B cell (primary cell): ENCODE measurements at regions of chr10 and their contacts with region 1.

Region 1: DNA sequence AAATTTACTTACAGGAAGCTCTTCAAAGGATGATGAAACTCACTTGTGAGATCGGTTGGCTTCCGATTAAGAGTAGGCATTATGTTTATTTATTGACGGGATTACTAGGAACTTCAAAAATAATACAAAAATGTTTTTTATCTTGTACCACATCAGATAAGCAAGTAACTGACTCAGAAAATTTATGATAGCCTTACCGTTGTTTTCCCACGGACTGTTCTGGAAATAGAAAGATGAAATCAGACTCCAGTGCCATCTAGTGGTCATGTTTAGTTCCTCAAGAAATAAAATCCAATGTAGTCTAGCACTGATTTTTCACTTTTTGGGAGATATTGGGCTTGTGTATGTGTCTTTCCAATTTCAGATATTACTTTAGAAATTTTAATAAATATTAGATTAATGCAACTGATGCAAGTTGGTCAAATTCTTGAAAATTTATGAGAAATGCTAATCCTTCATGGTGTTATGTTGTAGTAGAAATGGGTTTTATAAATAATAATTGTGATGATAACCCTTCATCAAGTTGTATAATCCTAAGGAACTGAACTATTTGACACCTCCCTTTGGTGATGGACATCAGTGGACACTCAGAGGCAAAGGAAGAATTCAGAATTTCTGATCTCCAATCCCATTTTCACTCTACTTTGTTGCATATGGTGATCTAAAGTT is 168.8 kb downstream of the TMEM26 start:
- DNase-seq: peak; percentile 64
- ATAC-seq: no peak
- H3K4me3 ChIP-seq: no peak overlapping the region
- H3K4me3 Mint-ChIP-seq: peak overlapping the region; percentile 30
- H3K27ac ChIP-seq: no peak overlapping the region
- H3K27ac Mint-ChIP-seq: no peak overlapping the region
- H3K4me1 ChIP-seq: peaks cover 20 to 26% of the 10 kb centered on the region in 2 donors
- H3K4me1 Mint-ChIP-seq: peaks cover 31% of the 10 kb centered on the region
- H3K27me3 ChIP-seq: no peaks in the 10 kb centered on the region
- H3K27me3 Mint-ChIP-seq: no peaks in the 10 kb centered on the region
- CTCF ChIP-seq: peak; percentile 93

Region 2: GRCh38 chr10:60444494-60445064 is 839.8 kb before region 1 on chr10:
- CTCF ChIA-PET with region 1: no interaction called
- POLR2A ChIA-PET with region 1: no interaction called
- intact Hi-C with region 1: loop called (anchors 10 kb)
- DNase-seq: no peak
- ATAC-seq: no peak
- H3K4me3 ChIP-seq: no peak overlapping the region
- H3K4me3 Mint-ChIP-seq: no peak overlapping the region
- H3K27ac ChIP-seq: no peak overlapping the region
- H3K27ac Mint-ChIP-seq: no peak overlapping the region
- H3K4me1 ChIP-seq: peaks cover 7 to 8% of the 10 kb centered on the region in 2 donors
- H3K4me1 Mint-ChIP-seq: peaks cover 8% of the 10 kb centered on the region
- H3K27me3 ChIP-seq: no peaks in the 10 kb centered on the region
- H3K27me3 Mint-ChIP-seq: no peaks in the 10 kb centered on the region
- CTCF ChIP-seq: peak; percentile 27

Region 3: GRCh38 chr10:60816628-60817397 is 467.5 kb before region 1 on chr10:
- CTCF ChIA-PET with region 1: interaction called, 13 read pairs
- POLR2A ChIA-PET with region 1: no interaction called
- intact Hi-C with region 1: loop called (anchors 1 kb)
- DNase-seq: peak; percentile 75
- ATAC-seq: peak; percentile 65
- H3K4me3 ChIP-seq: no peak overlapping the region
- H3K4me3 Mint-ChIP-seq: no peak overlapping the region
- H3K27ac ChIP-seq: no peak overlapping the region
- H3K27ac Mint-ChIP-seq: no peak overlapping the region
- H3K4me1 ChIP-seq: peaks cover 0 to 3% of the 10 kb centered on the region in 2 donors
- H3K4me1 Mint-ChIP-seq: peaks cover 7% of the 10 kb centered on the region
- H3K27me3 ChIP-seq: no peaks in the 10 kb centered on the region
- H3K27me3 Mint-ChIP-seq: no peaks in the 10 kb centered on the region
- CTCF ChIP-seq: peak; percentile 93

Region 4: DNA sequence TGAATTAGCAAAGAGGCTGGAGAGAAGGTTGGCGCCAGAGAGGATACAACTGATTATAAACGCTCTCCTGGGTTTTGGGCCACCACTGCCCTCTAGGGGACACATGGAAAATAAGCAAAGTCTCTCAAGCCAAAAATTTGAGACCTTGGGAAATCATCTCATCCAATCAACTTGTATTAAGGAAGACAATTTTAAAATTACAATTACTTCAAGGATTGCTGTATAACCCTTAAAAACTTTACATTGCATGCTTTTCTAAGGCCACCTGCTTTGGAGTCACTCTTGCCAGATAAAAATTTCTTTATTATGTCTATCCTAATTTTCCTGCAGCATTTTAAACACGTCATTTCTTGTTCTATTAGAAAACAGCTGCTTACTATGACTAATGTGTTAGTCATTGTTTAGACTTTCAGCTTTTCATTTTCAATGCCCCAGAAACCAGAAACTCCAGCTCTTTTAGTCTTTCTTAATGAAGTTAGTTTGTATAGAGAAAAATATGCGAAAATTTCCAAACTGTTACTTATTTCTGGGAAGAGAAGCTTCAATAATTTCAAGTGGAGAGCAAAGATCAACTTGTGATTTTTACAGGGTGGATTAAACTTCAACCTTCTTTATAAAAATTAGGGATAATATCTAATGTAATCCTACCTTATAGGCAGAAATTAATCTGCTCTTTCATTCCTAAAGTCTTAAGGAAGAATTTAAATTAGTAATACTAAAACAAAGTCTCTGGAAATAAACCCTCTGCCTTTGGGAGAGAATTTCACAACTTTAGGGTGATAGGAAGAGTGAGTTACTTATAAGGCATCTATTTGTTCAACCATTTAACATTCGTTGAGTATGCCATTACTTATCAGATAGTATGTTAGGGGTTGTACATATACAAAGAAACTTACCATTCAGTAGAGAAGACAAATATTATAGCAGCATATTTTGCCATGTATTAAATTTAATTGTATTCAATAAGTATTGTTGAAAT is 319.8 kb before region 1 on chr10:
- CTCF ChIA-PET with region 1: no interaction called
- POLR2A ChIA-PET with region 1: no interaction called
- intact Hi-C with region 1: loop called (anchors 1 kb)
- DNase-seq: peak; percentile 67
- ATAC-seq: peak; percentile 58
- H3K4me3 ChIP-seq: no peak overlapping the region
- H3K4me3 Mint-ChIP-seq: no peak overlapping the region
- H3K27ac ChIP-seq: no peak overlapping the region
- H3K27ac Mint-ChIP-seq: no peak overlapping the region
- H3K4me1 ChIP-seq: peaks cover 12 to 13% of the 10 kb centered on the region in 2 donors
- H3K4me1 Mint-ChIP-seq: peaks cover 20% of the 10 kb centered on the region
- H3K27me3 ChIP-seq: no peaks in the 10 kb centered on the region
- H3K27me3 Mint-ChIP-seq: peaks cover 5% of the 10 kb centered on the region
- CTCF ChIP-seq: peak; percentile 93

Region 5: DNA sequence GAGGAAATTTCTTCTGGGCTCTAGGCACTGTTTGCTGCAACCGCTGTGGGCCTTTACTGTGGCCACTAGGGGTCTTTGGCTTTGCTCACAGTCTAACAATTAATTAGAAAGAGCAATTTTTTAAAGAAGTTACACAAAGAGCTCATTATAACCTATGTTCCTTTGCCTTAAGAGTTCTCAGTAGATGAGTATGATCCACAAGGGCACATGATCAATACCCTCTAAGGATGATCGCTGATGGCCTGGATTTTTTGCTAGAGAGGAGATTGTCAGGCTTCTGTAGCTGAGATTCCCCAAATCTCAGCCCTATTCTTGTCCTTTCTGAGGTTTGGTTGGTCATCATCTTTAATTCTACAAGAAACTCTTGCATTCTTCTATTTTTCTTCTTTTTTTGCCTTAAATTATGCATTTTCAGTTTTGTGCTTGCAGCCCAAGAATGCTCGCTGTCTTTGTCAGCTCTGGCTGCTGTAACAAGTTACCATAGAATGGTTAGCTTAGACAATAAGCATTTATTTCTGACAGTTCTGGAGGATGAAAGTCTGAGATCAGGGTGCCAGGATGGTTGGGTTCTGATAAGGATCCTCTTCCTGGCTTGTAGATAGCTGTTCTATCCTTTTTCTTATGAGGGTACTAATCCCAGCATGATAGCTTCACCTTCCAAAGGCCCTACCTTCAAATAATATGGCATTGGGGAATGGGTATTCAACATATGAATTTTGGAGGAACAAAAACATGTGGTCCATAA is 259.3 kb before region 1 on chr10:
- CTCF ChIA-PET with region 1: interaction called, 13 read pairs
- POLR2A ChIA-PET with region 1: no interaction called
- intact Hi-C with region 1: loop called (anchors 1 kb)
- DNase-seq: peak; percentile 18
- ATAC-seq: peak; percentile 33
- H3K4me3 ChIP-seq: no peak overlapping the region
- H3K4me3 Mint-ChIP-seq: no peak overlapping the region
- H3K27ac ChIP-seq: no peak overlapping the region
- H3K27ac Mint-ChIP-seq: no peak overlapping the region
- H3K4me1 ChIP-seq: no peaks in the 10 kb centered on the region
- H3K4me1 Mint-ChIP-seq: no peaks in the 10 kb centered on the region
- H3K27me3 ChIP-seq: peaks cover 0 to 7% (median 3%) of the 10 kb centered on the region in 4 experiments
- H3K27me3 Mint-ChIP-seq: peaks cover 23% of the 10 kb centered on the region
- CTCF ChIP-seq: peak; percentile 72

Region 6: GRCh38 chr10:61140765-61141392 is 143.5 kb before region 1 on chr10:
- CTCF ChIA-PET with region 1: interaction called, 24 read pairs
- POLR2A ChIA-PET with region 1: no interaction called
- intact Hi-C with region 1: loop called (anchors 1 kb)
- DNase-seq: peak; percentile 63
- ATAC-seq: peak; percentile 33
- H3K4me3 ChIP-seq: no peak overlapping the region
- H3K4me3 Mint-ChIP-seq: no peak overlapping the region
- H3K27ac ChIP-seq: no peak overlapping the region
- H3K27ac Mint-ChIP-seq: no peak overlapping the region
- H3K4me1 ChIP-seq: peaks cover 17 to 18% of the 10 kb centered on the region in 2 donors
- H3K4me1 Mint-ChIP-seq: peaks cover 25% of the 10 kb centered on the region
- H3K27me3 ChIP-seq: no peaks in the 10 kb centered on the region
- H3K27me3 Mint-ChIP-seq: peaks cover 4% of the 10 kb centered on the region
- CTCF ChIP-seq: peak; percentile 84